Right lobe of liver (tissue), 6 donors: ENCODE measurements at regions of chr4 and their contacts with region 1.

Region 1: DNA sequence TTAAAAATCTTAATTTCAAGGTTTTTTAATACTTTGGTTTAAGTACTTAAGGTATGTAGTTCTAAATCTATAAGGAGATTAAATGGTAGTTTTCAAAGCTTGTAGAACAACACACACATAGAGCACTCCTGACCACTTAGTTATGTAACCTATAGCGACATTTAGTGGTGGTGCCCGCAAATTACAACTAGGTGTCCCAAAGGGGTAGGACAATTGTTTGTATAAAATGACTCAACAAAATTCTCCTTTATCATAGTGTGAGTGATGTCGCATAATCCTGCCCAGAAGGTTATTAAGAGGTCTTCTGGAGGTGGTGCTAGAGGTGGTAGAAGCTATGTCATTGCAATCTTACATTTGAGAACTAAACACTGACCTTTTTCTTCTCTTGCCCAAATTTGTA is 373.0 kb upstream of the RASGEF1B start:
- DNase-seq: peak in 2 of 3 donors; percentile 61 to 80
- ATAC-seq: peak; percentile 98 to 99 (median 98)
- H3K4me3 ChIP-seq: no peak overlapping the region
- H3K27ac ChIP-seq: no peak overlapping the region
- H3K4me1 ChIP-seq: no peaks in the 10 kb centered on the region
- H3K27me3 ChIP-seq: no peaks in the 10 kb centered on the region
- CTCF ChIP-seq: peak; percentile 74 to 86 (median 80)
- POLR2A ChIP-seq: no peak

Region 2: DNA sequence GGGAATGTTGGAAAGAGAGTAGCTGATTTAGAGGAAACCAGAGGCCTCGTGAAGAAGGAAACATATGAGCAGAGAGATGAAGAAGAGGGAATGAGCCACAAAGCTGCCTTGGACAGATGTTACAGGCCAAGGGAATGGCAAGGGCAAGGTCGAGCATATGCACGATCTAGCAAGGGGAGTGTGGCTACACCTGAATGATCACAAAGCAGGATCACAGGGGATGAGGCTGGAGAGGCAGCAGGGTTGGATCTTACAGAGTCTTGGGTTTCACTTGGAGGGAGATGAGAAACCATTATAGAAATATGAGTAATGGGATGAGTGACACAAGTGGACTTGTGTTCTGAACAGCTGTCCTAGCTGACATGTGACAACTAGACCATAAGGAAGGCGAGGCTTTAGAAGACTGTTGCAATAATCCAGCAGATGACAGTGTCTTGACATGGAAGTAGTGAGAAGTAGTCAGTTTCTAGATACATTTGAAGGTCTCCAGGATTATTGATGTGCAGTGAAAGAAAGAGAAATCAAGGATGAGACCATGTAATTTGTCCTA is 431.7 kb before region 1 on chr4:
- intact Hi-C with region 1: loop called in 1 of 2 experiments (anchors 5 kb)
- DNase-seq: no peak
- ATAC-seq: no peak
- H3K4me3 ChIP-seq: no peak overlapping the region
- H3K27ac ChIP-seq: no peak overlapping the region
- H3K4me1 ChIP-seq: no peaks in the 10 kb centered on the region
- H3K27me3 ChIP-seq: no peaks in the 10 kb centered on the region
- CTCF ChIP-seq: no peak
- POLR2A ChIP-seq: no peak

Region 3: GRCh38 chr4:81471588-81472288 is 373.0 kb before region 1 on chr4 and contains the start of gene RASGEF1B:
- intact Hi-C with region 1: loop called in 1 of 2 experiments (anchors 10 kb)
- DNase-seq: peak; percentile 96 to 97 (median 97)
- ATAC-seq: peak; percentile 81 to 95 (median 91)
- H3K4me3 ChIP-seq: peak within 1 kb of the TSS; percentile 81 to 90 (median 87)
- H3K27ac ChIP-seq: peak within 1 kb of the TSS; percentile 97 to 100 (median 99)
- H3K4me1 ChIP-seq: peaks cover 0 to 41% (median 17%) of the 10 kb centered on the region in 4 donors
- H3K27me3 ChIP-seq: no peaks in the 10 kb centered on the region
- CTCF ChIP-seq: no peak
- POLR2A ChIP-seq: peak; percentile 99
- total RNA-seq, gene RASGEF1B: 22.9 to 51.9 (median 25.8) TPM

Region 4: DNA sequence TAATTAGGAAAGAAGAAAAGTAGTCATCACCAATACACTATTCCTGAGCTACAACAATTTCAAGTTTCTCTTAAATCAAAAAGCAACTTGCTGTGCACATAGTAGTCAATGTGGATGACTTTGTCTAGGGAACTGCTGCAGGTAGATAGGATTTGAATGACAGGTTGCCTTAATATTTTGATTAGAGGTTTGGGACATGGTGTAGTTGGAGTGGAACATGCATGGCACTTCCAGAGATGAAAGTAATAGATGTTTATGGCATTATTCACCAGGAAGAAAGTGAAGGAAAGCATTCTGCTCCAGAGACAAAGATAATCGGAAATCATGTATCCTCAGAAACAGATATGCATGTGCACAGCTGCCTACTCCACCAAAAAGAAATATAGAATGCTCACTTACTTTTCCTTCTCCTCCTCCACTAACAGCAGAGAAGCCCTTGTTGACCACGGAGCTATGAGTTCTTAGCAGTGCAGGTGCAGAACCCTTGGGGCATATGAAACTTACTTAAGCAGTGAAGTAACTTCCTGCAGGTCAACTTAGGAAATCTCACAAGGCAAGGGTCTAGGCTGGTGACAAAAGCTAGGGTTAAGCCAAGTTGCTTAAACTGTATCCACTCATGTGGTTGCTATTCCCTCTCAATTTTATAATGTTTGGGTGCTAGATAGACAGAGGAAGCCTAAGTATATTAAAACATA is 138.3 kb after region 1 on chr4:
- intact Hi-C with region 1: no loop called
- DNase-seq: no peak
- ATAC-seq: no peak
- H3K4me3 ChIP-seq: no peak overlapping the region
- H3K27ac ChIP-seq: no peak overlapping the region
- H3K4me1 ChIP-seq: peaks cover 0 to 5% (median 0%) of the 10 kb centered on the region in 4 donors
- H3K27me3 ChIP-seq: no peaks in the 10 kb centered on the region
- CTCF ChIP-seq: no peak
- POLR2A ChIP-seq: no peak